Posterior cingulate gyrus (tissue), 11 donors: ENCODE measurements at regions of chr14 and their contacts with region 1.

Region 1: GRCh38 chr14:50231475-50232275 is at the start of gene SOS2:
- DNase-seq: peak; percentile 74 to 97 (median 84)

Region 2: GRCh38 chr14:49862089-49862673 is 369.5 kb before region 1 on chr14:
- intact Hi-C with region 1: loop called (anchors 5 kb)
- DNase-seq: peak; percentile 63 to 96 (median 78)

Region 3: DNA sequence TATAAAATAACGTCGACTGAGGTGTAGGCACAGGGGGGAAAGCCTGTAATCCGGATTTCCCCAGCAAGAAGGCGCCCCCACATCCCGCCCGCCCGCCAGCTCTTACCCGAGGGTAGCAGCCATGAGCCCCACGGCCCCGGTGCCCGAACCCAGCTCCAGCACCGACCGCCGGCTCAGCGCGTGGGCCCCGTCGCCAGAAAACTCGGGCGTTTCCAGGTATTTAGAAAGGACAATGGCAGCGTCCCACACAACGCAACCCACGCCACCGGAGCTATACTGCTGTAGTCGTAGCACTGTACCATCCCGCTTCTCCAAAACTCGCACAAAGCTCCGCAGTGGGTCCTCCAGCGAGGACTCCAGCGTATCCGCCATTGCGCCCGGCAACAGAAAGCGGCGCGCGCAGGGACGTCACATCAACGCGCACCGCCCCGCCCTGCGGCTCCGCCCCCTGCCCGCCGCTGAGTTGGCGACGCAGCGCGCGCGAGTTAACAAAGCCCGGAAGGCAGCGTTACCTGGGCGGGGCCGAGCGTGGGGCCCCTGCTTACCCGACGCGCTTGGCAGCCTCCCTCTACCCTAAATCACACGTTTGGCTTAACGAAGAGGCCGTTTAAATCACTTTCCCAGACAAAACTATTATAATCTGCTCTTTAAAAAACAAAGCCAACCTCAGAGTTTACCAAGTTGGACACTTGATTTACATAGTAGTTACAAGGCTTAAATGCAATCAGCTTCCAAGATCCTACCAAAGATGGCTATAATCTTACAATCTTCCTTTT is 115.3 kb before region 1 on chr14 and contains the start of gene VCPKMT:
- intact Hi-C with region 1: loop called (anchors 5 kb)
- DNase-seq: peak; percentile 84 to 99 (median 90)

Region 4: GRCh38 chr14:50311975-50312733 is 80.5 kb after region 1 on chr14 and contains the starts of genes DMAC2L and L2HGDH:
- intact Hi-C with region 1: loop called (anchors 2 kb)
- DNase-seq: peak; percentile 88 to 99 (median 93)